Activated CD4-positive, alpha-beta T cell treated with anti-CD3 and anti-CD28 coated beads, Interleukin-2, amount 10 ng/mL, durations not matched to agents 7 days and 5 days (primary cell): ENCODE measurements at regions of chr1 and their contacts with region 1.

Region 1: GRCh38 chr1:21255278-21255942 is 34.9 kb downstream of the ECE1 start:
- DNase-seq: peak; percentile 87
- H3K4me3 Mint-ChIP-seq: no peak overlapping the region
- H3K27ac Mint-ChIP-seq: no peak overlapping the region
- H3K4me1 Mint-ChIP-seq: peaks cover 32% of the 10 kb centered on the region
- H3K27me3 Mint-ChIP-seq: no peaks in the 10 kb centered on the region

Region 2: GRCh38 chr1:20633190-20634064 is 622.0 kb before region 1 on chr1 and contains the start of gene PINK1:
- CTCF ChIA-PET with region 1: no interaction called
- POLR2A ChIA-PET with region 1: no interaction called
- DNase-seq: peak; percentile 82
- H3K4me3 Mint-ChIP-seq: peak within 1 kb of the TSS; percentile 76
- H3K27ac Mint-ChIP-seq: peak within 1 kb of the TSS; percentile 68
- H3K4me1 Mint-ChIP-seq: peaks cover 10% of the 10 kb centered on the region
- H3K27me3 Mint-ChIP-seq: peaks cover 2% of the 10 kb centered on the region
- total RNA-seq, gene PINK1: 3.1 to 4.1 TPM

Region 3: DNA sequence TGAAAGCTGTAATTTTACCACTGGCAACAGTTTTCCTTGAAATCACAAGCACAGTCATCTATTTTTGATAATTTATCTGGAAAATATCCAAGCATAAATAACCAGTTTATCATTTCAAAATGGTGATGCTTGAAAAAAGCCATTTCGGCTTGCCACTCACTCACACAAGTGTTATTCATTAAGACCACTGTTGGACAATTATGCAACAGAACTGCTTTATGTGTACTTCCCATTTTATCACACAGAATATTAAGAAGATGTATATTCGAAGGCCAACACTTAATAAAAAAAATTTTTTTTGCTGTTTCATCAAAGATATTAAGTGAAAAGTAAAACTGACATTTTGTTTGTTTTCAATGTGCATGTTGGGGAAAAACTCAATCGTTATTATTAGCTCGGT is 141.0 kb before region 1 on chr1:
- CTCF ChIA-PET with region 1: no interaction called
- POLR2A ChIA-PET with region 1: no interaction called
- DNase-seq: no peak
- H3K4me3 Mint-ChIP-seq: no peak overlapping the region
- H3K27ac Mint-ChIP-seq: no peak overlapping the region
- H3K4me1 Mint-ChIP-seq: no peaks in the 10 kb centered on the region
- H3K27me3 Mint-ChIP-seq: no peaks in the 10 kb centered on the region

Region 4: GRCh38 chr1:21244986-21245687 is 10.3 kb before region 1 on chr1:
- CTCF ChIA-PET with region 1: interaction called, 12 read pairs
- POLR2A ChIA-PET with region 1: no interaction called
- DNase-seq: no peak
- H3K4me3 Mint-ChIP-seq: no peak overlapping the region
- H3K27ac Mint-ChIP-seq: no peak overlapping the region
- H3K4me1 Mint-ChIP-seq: no peaks in the 10 kb centered on the region
- H3K27me3 Mint-ChIP-seq: no peaks in the 10 kb centered on the region

Region 5: DNA sequence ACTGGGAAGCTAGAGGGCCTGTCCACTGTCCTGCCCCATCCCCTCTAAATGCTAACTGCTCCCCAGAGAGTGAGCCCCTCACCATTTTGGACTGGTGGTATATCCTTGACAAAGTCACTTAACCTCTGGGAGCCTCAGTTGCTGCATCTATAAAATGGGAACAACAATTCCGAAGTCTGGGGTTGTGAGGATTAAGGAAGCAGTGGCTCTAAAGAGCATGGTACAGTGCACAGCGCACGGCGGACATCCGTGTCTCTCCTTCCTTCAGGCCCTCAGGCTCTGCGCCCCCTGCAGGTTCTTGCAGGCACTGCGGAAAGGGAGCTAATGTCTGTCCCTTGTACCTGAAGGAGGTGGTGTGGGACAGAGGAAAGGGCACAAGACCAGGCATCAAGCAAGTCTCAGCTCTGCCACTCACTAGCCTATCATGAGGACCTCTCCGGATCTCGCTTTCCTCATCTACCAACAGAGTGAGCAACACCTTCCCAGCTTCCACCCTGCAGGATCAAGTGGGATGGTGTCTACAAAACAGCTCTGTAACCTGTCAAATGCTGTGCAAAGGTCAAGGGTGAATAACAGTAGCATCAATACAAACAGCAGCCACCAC is 14.8 kb after region 1 on chr1:
- CTCF ChIA-PET with region 1: interaction called, 44 read pairs
- POLR2A ChIA-PET with region 1: no interaction called
- DNase-seq: peak; percentile 85
- H3K4me3 Mint-ChIP-seq: no peak overlapping the region
- H3K27ac Mint-ChIP-seq: peak overlapping the region; percentile 76
- H3K4me1 Mint-ChIP-seq: peaks cover 22% of the 10 kb centered on the region
- H3K27me3 Mint-ChIP-seq: no peaks in the 10 kb centered on the region

Region 6: DNA sequence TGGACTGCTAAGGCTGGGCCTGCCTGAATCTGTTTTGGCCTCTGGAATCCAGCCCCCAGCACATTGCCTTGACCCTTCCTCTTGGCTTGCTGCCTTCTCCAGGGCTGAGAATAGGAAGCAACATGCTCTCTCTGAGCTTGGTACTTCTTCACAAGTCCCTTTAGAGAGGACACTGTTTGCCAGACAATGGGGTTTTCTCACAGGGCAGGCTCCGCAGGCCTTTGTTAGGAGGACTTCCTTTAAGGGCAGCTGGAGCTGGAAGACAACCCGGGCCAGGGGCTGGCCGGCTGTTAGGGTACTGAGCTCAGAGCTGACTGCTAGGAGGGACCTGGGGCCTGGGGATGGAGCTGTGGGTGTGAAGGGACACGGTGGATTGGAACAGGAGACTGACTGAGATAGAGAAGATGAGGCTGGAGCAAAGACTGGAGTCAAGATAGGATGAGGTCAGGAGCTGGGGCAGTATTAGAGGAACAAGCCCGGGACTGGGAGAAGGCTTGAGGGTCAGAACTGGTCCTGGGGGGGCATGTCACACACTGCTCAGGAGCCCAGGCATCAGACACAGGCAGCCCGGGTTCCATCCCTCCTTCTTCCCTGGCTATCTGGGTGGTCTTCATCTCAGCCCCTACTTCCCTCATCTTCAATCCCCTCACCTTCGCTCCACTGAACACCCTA is 248.4 kb after region 1 on chr1:
- CTCF ChIA-PET with region 1: no interaction called
- POLR2A ChIA-PET with region 1: no interaction called
- DNase-seq: no peak
- H3K4me3 Mint-ChIP-seq: no peak overlapping the region
- H3K27ac Mint-ChIP-seq: no peak overlapping the region
- H3K4me1 Mint-ChIP-seq: peaks cover 2% of the 10 kb centered on the region
- H3K27me3 Mint-ChIP-seq: peaks cover 23% of the 10 kb centered on the region